Activated CD4-positive, alpha-beta memory T cell treated with anti-CD3 and anti-CD28 coated beads for 36 hours (primary cell): ENCODE measurements at regions of chr19 and their contacts with region 1.

Region 1: DNA sequence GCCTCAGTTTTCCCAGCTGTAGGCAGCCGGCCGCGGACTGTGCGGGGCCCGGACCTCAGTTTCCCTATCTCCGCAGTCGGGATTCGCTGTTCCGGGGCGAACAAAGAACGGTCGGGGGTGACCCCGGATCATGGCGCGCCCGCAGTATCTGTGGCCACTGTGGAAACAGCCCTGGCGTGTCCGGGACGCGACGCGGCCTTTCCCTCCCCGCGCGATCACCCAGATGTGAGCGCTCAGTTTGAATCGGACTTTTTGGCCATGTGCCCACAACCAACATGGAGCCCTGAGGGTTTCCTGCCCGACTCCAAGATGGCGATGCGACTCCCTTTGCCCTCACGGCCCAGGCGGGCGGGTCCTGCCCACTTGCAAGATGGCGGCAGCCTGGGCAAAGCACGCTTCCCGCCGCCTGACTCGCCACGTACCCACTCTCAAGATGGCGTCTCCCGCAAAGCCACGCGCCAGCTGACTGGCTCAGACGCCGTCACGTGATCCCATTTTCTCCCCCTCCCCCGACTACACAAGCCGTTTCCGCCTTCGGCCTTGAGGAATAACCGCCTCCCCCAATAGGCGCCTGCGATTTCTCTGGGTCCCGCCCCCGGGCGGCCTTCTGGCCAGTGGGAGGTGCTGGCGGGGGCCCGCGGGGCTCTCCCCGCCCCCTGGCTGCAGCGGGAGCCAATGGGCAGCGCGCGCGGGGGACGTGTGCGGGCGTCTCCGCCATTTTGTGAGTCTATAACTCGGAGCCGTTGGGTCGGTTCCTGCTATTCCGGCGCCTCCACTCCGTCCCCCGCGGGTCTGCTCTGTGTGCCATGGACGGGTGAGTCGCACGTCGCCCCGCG is at the start of gene PTBP1:
- DNase-seq: peak; percentile 100
- H3K4me3 Mint-ChIP-seq: peak within 1 kb of the TSS; percentile 93
- H3K27ac Mint-ChIP-seq: peak within 1 kb of the TSS; percentile 90
- H3K4me1 Mint-ChIP-seq: peaks cover 22% of the 10 kb centered on the region
- H3K27me3 Mint-ChIP-seq: no peaks in the 10 kb centered on the region
- total RNA-seq, gene PTBP1: 464 to 465 TPM

Region 2: GRCh38 chr19:506404-507285 is 290.3 kb before region 1 on chr19:
- CTCF ChIA-PET with region 1: no interaction called
- POLR2A ChIA-PET with region 1: no interaction called
- intact Hi-C with region 1: loop called (anchors 1 kb)
- DNase-seq: peak; percentile 95
- H3K4me3 Mint-ChIP-seq: peak overlapping the region; percentile 89
- H3K27ac Mint-ChIP-seq: peak overlapping the region; percentile 100
- H3K4me1 Mint-ChIP-seq: peaks cover 40% of the 10 kb centered on the region
- H3K27me3 Mint-ChIP-seq: no peaks in the 10 kb centered on the region

Region 3: GRCh38 chr19:633068-633785 is 163.7 kb before region 1 on chr19 and contains the start of gene POLRMT:
- CTCF ChIA-PET with region 1: no interaction called
- POLR2A ChIA-PET with region 1: no interaction called
- intact Hi-C with region 1: loop called (anchors 2 kb)
- DNase-seq: peak; percentile 99
- H3K4me3 Mint-ChIP-seq: peak within 1 kb of the TSS; percentile 96
- H3K27ac Mint-ChIP-seq: peak within 1 kb of the TSS; percentile 84
- H3K4me1 Mint-ChIP-seq: peaks cover 33% of the 10 kb centered on the region
- H3K27me3 Mint-ChIP-seq: no peaks in the 10 kb centered on the region
- total RNA-seq, gene POLRMT: 71.5 to 72.5 TPM

Region 4: DNA sequence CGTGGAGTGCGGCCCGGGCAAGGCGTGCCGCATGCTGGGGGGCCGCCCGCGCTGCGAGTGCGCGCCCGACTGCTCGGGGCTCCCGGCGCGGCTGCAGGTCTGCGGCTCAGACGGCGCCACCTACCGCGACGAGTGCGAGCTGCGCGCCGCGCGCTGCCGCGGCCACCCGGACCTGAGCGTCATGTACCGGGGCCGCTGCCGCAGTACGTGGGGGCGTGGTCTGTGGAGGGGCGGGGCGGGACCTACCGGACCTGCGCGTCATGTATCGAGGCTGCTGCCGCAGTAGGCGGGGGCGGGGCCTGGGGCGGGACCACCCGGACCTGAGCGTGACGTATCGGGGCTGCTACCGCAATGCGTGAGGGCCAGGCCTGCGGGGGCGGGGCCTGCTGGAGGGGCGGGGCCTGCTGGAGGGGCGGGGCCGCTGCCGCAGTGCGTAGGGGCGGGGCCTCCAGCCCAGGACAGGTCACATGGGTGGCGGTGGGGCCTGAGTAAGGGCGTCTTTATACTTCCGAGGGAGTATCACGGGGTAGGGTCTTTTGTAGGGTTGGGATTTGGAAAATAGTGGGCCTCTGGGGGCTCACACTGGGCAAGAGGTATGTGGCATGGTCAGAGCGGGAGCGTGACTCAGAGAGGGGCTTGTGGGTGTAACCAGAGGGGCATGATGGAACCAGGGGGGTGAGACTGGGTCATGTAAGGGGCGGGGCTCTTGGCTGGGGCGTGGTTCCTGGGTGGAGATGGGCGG is 116.5 kb before region 1 on chr19:
- CTCF ChIA-PET with region 1: no interaction called
- POLR2A ChIA-PET with region 1: no interaction called
- intact Hi-C with region 1: loop called (anchors 1 kb)
- DNase-seq: peak; percentile 100
- H3K4me3 Mint-ChIP-seq: peak overlapping the region; percentile 79
- H3K27ac Mint-ChIP-seq: peak overlapping the region; percentile 91
- H3K4me1 Mint-ChIP-seq: no peaks in the 10 kb centered on the region
- H3K27me3 Mint-ChIP-seq: peaks cover 4% of the 10 kb centered on the region

Region 5: DNA sequence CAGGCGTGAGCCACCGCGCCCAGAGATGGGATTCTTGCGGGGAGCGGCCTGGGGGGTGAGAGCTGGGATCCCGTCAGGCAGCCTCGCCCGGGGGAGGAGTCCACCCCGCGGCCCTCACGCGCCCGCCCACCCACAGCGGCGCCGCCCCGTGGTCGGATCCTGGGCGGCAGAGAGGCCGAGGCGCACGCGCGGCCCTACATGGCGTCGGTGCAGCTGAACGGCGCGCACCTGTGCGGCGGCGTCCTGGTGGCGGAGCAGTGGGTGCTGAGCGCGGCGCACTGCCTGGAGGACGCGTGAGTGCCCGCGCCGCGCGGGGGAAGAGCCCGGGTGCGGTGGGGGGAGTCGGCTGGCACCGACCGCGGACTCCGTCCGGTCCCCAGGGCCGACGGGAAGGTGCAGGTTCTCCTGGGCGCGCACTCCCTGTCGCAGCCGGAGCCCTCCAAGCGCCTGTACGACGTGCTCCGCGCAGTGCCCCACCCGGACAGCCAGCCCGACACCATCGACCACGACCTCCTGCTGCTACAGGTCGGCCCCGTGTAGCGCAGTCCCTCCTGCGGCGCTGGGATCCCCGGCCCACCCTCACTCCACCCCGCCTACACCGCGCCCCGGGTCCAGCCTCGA is 63.7 kb after region 1 on chr19:
- CTCF ChIA-PET with region 1: no interaction called
- POLR2A ChIA-PET with region 1: interaction called, 3 read pairs
- intact Hi-C with region 1: loop called (anchors 2 kb)
- DNase-seq: peak; percentile 62
- H3K4me3 Mint-ChIP-seq: no peak overlapping the region
- H3K27ac Mint-ChIP-seq: no peak overlapping the region
- H3K4me1 Mint-ChIP-seq: peaks cover 14% of the 10 kb centered on the region
- H3K27me3 Mint-ChIP-seq: peaks cover 8% of the 10 kb centered on the region

Region 6: GRCh38 chr19:907183-907853 is 110.4 kb after region 1 on chr19:
- CTCF ChIA-PET with region 1: no interaction called
- POLR2A ChIA-PET with region 1: interaction called, 4 read pairs
- intact Hi-C with region 1: loop called (anchors 5 kb)
- DNase-seq: peak; percentile 54
- H3K4me3 Mint-ChIP-seq: no peak overlapping the region
- H3K27ac Mint-ChIP-seq: peak overlapping the region; percentile 91
- H3K4me1 Mint-ChIP-seq: peaks cover 52% of the 10 kb centered on the region
- H3K27me3 Mint-ChIP-seq: no peaks in the 10 kb centered on the region

Region 7: GRCh38 chr19:1249298-1249989 is 452.5 kb after region 1 on chr19:
- CTCF ChIA-PET with region 1: no interaction called
- POLR2A ChIA-PET with region 1: no interaction called
- intact Hi-C with region 1: loop called (anchors 2 kb)
- DNase-seq: peak; percentile 97
- H3K4me3 Mint-ChIP-seq: peak overlapping the region; percentile 71
- H3K27ac Mint-ChIP-seq: peak overlapping the region; percentile 82
- H3K4me1 Mint-ChIP-seq: peaks cover 12% of the 10 kb centered on the region
- H3K27me3 Mint-ChIP-seq: no peaks in the 10 kb centered on the region

Region 8: GRCh38 chr19:1304197-1304924 is 507.5 kb after region 1 on chr19:
- CTCF ChIA-PET with region 1: no interaction called
- POLR2A ChIA-PET with region 1: no interaction called
- intact Hi-C with region 1: no loop called
- DNase-seq: no peak
- H3K4me3 Mint-ChIP-seq: no peak overlapping the region
- H3K27ac Mint-ChIP-seq: no peak overlapping the region
- H3K4me1 Mint-ChIP-seq: no peaks in the 10 kb centered on the region
- H3K27me3 Mint-ChIP-seq: no peaks in the 10 kb centered on the region